ENCODE measurements at regions of chr11 and their contacts with region 1.

Region 1: GRCh38 chr11:83976086-83976485 is 689.9 kb upstream of the CCDC90B start:
- DNase-seq: no peak
- H3K4me3 ChIP-seq: no peak overlapping the region
- H3K27ac ChIP-seq: no peak overlapping the region
- H3K4me1 ChIP-seq: no peaks in the 10 kb centered on the region
- H3K27me3 ChIP-seq: no peaks in the 10 kb centered on the region
- CTCF ChIP-seq: no peak
- POLR2A ChIP-seq: no peak

Region 2: GRCh38 chr11:83918476-83918875 is 57.6 kb before region 1 on chr11:
- intact Hi-C with region 1: loop called (anchors 2 kb)
- DNase-seq: no peak
- H3K4me3 ChIP-seq: no peak overlapping the region
- H3K27ac ChIP-seq: no peak overlapping the region
- H3K4me1 ChIP-seq: no peaks in the 10 kb centered on the region
- H3K27me3 ChIP-seq: no peaks in the 10 kb centered on the region
- CTCF ChIP-seq: no peak
- POLR2A ChIP-seq: no peak

Region 3: GRCh38 chr11:83990160-83990733 is 14.2 kb after region 1 on chr11:
- intact Hi-C with region 1: no loop called
- DNase-seq: no peak
- H3K4me3 ChIP-seq: no peak overlapping the region
- H3K27ac ChIP-seq: peak overlapping the region in 1 of 2 donors; percentile 15
- H3K4me1 ChIP-seq: no peaks in the 10 kb centered on the region
- H3K27me3 ChIP-seq: no peaks in the 10 kb centered on the region
- CTCF ChIP-seq: no peak
- POLR2A ChIP-seq: no peak

Measured in breast epithelium (tissue), 4 donors.